ENCODE measurements at regions of chr16 and their contacts with region 1.

Region 1: DNA sequence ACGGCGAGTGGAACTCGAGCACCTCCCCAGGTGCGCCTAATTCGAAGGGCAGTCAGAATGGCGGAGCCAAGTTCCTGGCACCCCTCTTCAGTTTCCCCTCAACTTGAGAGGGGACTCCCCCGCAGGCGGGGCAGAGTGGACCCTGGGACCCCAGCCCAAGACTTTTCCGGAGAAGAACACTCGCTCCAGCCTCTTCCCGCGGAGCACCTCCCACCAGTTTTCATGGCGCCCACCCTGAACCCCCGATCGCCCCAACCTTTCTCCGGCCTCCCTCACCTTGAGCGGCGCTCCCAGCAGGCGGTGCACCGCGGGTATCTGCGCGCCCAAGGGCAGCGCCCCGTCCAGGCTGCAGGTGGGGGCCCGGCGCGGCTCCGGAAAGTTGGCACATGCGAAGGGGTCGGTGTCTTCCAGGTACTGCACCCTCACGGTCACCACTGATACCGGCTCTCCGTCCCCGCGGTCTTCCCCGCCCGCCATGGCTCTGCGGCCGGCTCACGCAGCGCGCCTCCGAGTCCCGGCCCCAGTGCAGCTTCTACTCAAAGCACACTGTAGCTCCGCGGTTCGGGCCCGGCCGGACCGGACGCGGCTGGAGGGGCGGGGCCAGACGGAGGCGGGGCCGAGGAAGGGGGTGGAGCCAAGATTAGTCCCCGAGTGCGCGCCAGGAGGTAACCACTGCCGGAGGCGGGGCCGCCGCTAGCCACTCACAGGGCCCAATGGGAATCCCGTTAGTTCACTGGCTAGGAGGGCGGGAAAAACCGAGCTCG is at the start of gene FHOD1:
- DNase-seq: peak; percentile 98
- H3K4me3 Mint-ChIP-seq: peak within 1 kb of the TSS; percentile 85
- H3K27ac Mint-ChIP-seq: peak within 1 kb of the TSS; percentile 87
- H3K4me1 Mint-ChIP-seq: peaks cover 55% of the 10 kb centered on the region
- H3K27me3 Mint-ChIP-seq: peaks cover 6% of the 10 kb centered on the region
- total RNA-seq, gene FHOD1: 116 and 119 TPM in 2 replicates

Region 2: GRCh38 chr16:67159593-67160406 is 87.3 kb before region 1 on chr16 and contains the starts of genes FBXL8 and TRADD:
- intact Hi-C with region 1: loop called (anchors 1 kb)
- DNase-seq: peak; percentile 84
- H3K4me3 Mint-ChIP-seq: peak within 1 kb of the TSS; percentile 91
- H3K27ac Mint-ChIP-seq: peak within 1 kb of the TSS; percentile 92
- H3K4me1 Mint-ChIP-seq: peaks cover 45% of the 10 kb centered on the region
- H3K27me3 Mint-ChIP-seq: peaks cover 2% of the 10 kb centered on the region
- total RNA-seq, gene FBXL8: 19.3 and 22.4 TPM in 2 replicates
- total RNA-seq, gene TRADD: 29.0 TPM in 2 replicates

Region 3: GRCh38 chr16:67226804-67227557 is 20.1 kb before region 1 on chr16 and contains the start of gene TMEM208:
- intact Hi-C with region 1: loop called (anchors 1 kb)
- DNase-seq: peak; percentile 99
- H3K4me3 Mint-ChIP-seq: peak within 1 kb of the TSS; percentile 98
- H3K27ac Mint-ChIP-seq: peak within 1 kb of the TSS; percentile 94
- H3K4me1 Mint-ChIP-seq: peaks cover 43% of the 10 kb centered on the region
- H3K27me3 Mint-ChIP-seq: no peaks in the 10 kb centered on the region
- total RNA-seq, gene TMEM208: 68.5 and 72.4 TPM in 2 replicates

Region 4: GRCh38 chr16:67311607-67312488 is 64.7 kb after region 1 on chr16:
- intact Hi-C with region 1: loop called (anchors 1 kb)
- DNase-seq: peak; percentile 78
- H3K4me3 Mint-ChIP-seq: peak overlapping the region; percentile 19
- H3K27ac Mint-ChIP-seq: peak overlapping the region; percentile 98
- H3K4me1 Mint-ChIP-seq: peaks cover 45% of the 10 kb centered on the region
- H3K27me3 Mint-ChIP-seq: no peaks in the 10 kb centered on the region

Region 5: GRCh38 chr16:67419502-67420275 is 172.6 kb after region 1 on chr16:
- intact Hi-C with region 1: no loop called
- DNase-seq: no peak
- H3K4me3 Mint-ChIP-seq: no peak overlapping the region
- H3K27ac Mint-ChIP-seq: no peak overlapping the region
- H3K4me1 Mint-ChIP-seq: peaks cover 10% of the 10 kb centered on the region
- H3K27me3 Mint-ChIP-seq: peaks cover 41% of the 10 kb centered on the region

Region 6: DNA sequence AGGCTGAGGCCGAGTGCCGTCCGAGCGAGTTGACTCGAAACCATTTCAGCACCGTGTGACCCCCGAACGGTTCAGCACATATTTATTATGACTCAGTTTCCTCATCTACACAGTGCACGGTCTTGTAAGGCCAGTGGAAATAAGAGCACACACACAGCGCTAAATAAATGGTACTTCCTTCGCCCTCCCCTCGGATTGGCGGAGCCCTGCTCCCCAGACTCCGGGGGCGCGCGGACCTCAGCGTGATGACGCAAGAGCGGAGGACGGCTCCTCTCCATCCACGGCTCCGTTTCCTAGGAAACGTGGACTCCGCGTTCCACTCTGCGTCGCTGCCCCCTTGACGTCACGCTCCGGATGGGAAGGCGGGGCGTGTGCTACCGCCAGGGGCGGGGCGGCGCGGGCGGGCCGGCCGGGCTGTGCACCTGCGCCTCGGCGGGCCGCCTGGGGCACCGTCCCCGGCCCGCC is 413.5 kb after region 1 on chr16 and contains the start of gene PARD6A:
- intact Hi-C with region 1: loop called (anchors 2 kb)
- DNase-seq: peak; percentile 96
- H3K4me3 Mint-ChIP-seq: peak within 1 kb of the TSS; percentile 92
- H3K27ac Mint-ChIP-seq: peak within 1 kb of the TSS; percentile 97
- H3K4me1 Mint-ChIP-seq: peaks cover 20% of the 10 kb centered on the region
- H3K27me3 Mint-ChIP-seq: no peaks in the 10 kb centered on the region
- total RNA-seq, gene PARD6A: 13.4 and 16.1 TPM in 2 replicates

Region 7: GRCh38 chr16:68328151-68328859 is 1081.2 kb after region 1 on chr16:
- intact Hi-C with region 1: loop called (anchors 10 kb)
- DNase-seq: peak; percentile 73
- H3K4me3 Mint-ChIP-seq: no peak overlapping the region
- H3K27ac Mint-ChIP-seq: no peak overlapping the region
- H3K4me1 Mint-ChIP-seq: peaks cover 41% of the 10 kb centered on the region
- H3K27me3 Mint-ChIP-seq: no peaks in the 10 kb centered on the region